Tibial artery (tissue), 4 donors: ENCODE measurements at regions of chr4 and their contacts with region 1.

Region 1: GRCh38 chr4:107930821-107931774 is at the start of gene CYP2U1:
- DNase-seq: peak; percentile 91 to 95
- H3K4me3 ChIP-seq: peak within 1 kb of the TSS; percentile 75 to 84
- H3K27ac ChIP-seq: peak within 1 kb of the TSS; percentile 88 to 89
- H3K4me1 ChIP-seq: peaks cover 0 to 30% (median 13%) of the 10 kb centered on the region in 4 donors
- H3K27me3 ChIP-seq: no peaks in the 10 kb centered on the region
- CTCF ChIP-seq: peak; percentile 20 to 31

Region 2: GRCh38 chr4:107824353-107825071 is 106.6 kb before region 1 on chr4 and contains the start of gene SGMS2:
- intact Hi-C with region 1: loop called (anchors 10 kb)
- DNase-seq: peak; percentile 91 to 95
- H3K4me3 ChIP-seq: peak within 1 kb of the TSS; percentile 87 to 92
- H3K27ac ChIP-seq: peak within 1 kb of the TSS; percentile 90 to 94
- H3K4me1 ChIP-seq: peaks cover 0 to 30% (median 18%) of the 10 kb centered on the region in 4 donors
- H3K27me3 ChIP-seq: no peaks in the 10 kb centered on the region
- CTCF ChIP-seq: no peak

Region 3: DNA sequence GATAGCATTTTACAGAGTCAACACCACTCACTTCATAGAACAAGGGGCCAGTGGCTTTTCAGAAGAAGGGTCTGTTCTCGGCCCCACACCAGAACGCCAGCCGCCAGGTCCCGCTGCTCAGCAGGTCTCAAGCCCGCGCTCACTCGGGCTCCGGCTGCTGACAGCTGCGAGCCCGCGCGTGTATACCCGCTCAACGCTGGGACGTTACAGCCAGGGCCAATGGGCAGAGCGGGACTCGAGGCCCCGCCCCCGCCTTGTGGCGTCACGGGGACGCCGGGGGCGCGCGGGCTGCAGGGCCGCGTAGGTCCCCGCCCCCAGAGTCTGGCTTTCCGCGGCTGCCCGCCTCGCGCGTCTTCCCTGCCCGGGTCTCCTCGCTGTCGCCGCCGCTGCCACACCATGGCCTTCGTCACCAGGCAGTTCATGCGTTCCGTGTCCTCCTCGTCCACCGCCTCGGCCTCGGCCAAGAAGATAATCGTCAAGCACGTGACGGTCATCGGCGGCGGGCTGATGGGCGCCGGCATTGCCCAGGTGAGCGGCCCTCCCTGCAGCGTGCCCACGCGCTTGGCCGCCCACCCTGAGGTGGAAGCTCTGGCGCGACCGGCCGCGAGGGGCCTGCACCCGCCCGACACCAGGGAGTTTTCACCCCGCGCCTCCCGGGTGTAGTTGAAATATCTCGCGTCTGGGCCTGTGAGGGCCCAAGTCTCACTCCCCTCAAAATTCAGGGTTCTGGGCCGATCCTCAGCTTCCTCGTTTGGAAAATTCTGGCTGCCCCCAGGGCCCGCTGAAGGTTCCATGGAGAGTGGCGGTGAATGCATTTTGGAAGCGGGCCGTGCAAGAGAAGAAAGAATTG is 58.7 kb after region 1 on chr4 and contains the start of gene HADH:
- intact Hi-C with region 1: loop called (anchors 10 kb)
- DNase-seq: peak; percentile 93 to 97
- H3K4me3 ChIP-seq: peak within 1 kb of the TSS; percentile 74 to 96
- H3K27ac ChIP-seq: peak within 1 kb of the TSS; percentile 93 to 96
- H3K4me1 ChIP-seq: peaks cover 0 to 69% (median 35%) of the 10 kb centered on the region in 4 donors
- H3K27me3 ChIP-seq: no peaks in the 10 kb centered on the region
- CTCF ChIP-seq: no peak

Region 4: GRCh38 chr4:108018040-108018883 is 87.2 kb after region 1 on chr4:
- intact Hi-C with region 1: loop called (anchors 10 kb)
- DNase-seq: peak; percentile 85 to 87
- H3K4me3 ChIP-seq: no peak overlapping the region
- H3K27ac ChIP-seq: no peak overlapping the region
- H3K4me1 ChIP-seq: no peaks in the 10 kb centered on the region
- H3K27me3 ChIP-seq: no peaks in the 10 kb centered on the region
- CTCF ChIP-seq: peak; percentile 72 to 87